K562 (cell line): ENCODE measurements at regions of chr1 and their contacts with region 1.

Region 1: GRCh38 chr1:2227346-2228153 is 569 bp upstream of the SKI start:
- DNase-seq: peak; percentile 97 to 99 (median 98)
- ATAC-seq: peak; percentile 92
- H3K4me3 ChIP-seq: peak overlapping the region; percentile 70
- H3K27ac ChIP-seq: peak overlapping the region; percentile 99
- H3K4me1 ChIP-seq: peaks cover 19 to 59% of the 10 kb centered on the region in 2 experiments
- H3K27me3 ChIP-seq: no peaks in the 10 kb centered on the region
- CTCF ChIP-seq: peak in 1 of 3 experiments; percentile 12; a peak in 2 of 6 replicates
- EP300 ChIP-seq: no peak
- POLR2A ChIP-seq: peak; percentile 79
- RAD21 ChIP-seq: peak in 1 of 2 experiments; percentile 32; a peak in 2 of 4 replicates

Region 2: DNA sequence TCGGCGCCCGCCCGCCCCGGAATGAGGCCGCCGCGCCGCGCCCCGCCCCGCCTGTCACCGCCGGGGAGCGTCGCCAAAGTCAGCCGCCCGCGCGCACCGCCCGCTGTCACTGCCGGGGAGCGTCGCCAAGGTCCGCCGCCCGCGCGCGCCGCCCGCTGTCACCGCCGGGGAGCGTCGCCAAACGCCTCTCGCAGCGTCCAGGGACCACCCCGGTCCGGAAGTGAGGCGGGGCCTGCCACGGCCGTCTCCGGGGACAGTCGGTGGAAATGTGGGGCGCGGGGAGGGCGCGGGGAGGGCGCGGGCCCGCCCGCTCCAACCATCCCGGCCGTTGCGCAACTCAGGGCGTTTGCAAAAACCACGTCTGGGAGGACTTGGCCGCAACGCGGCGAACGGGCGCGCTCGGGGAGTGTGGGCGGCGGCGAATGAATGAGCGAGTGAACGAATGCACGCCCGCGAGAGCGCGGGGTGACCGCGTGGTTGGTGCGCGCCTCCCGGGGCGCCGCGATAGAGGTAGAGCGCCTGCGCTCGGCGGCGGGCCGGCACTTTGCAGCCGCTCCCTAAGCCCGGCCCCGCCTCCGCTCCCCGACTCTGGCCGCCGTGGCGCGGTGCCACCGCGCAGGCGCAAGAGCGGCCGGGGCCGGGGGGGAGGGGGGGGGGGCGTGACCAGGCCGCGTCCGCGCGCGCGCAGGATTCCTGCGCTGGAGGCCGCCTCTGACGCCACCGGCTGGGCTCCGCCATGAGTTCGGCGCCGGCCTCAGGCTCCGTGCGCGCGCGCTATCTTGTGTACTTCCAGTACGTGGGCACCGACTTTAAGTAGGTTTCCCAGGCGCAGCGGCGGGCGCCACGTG is 919.4 kb before region 1 on chr1 and contains the starts of genes ACAP3 and PUSL1:
- CTCF ChIA-PET with region 1: no interaction called
- POLR2A ChIA-PET with region 1: no interaction called
- in situ Hi-C with region 1: no loop called
- intact Hi-C with region 1: loop called (anchors 10 kb)
- DNase-seq: peak; percentile 95 to 99 (median 97)
- ATAC-seq: peak; percentile 52
- H3K4me3 ChIP-seq: peak within 1 kb of the TSS; percentile 94
- H3K27ac ChIP-seq: peak within 1 kb of the TSS; percentile 96
- H3K4me1 ChIP-seq: peaks cover 41 to 97% of the 10 kb centered on the region in 2 experiments
- H3K27me3 ChIP-seq: no peaks in the 10 kb centered on the region
- CTCF ChIP-seq: peak in 1 of 3 experiments; percentile 2; a peak in 1 of 6 replicates
- EP300 ChIP-seq: no peak
- POLR2A ChIP-seq: peak; percentile 63
- RAD21 ChIP-seq: no peak
- polyA plus RNA-seq, gene ACAP3: 0.01 to 0.06 TPM
- polyA plus RNA-seq, gene PUSL1: 0.62 to 1.7 TPM

Region 3: GRCh38 chr1:1511533-1512285 is 715.8 kb before region 1 on chr1 and contains the start of gene ATAD3A:
- CTCF ChIA-PET with region 1: no interaction called
- POLR2A ChIA-PET with region 1: no interaction called
- in situ Hi-C with region 1: no loop called
- intact Hi-C with region 1: no loop called
- DNase-seq: peak; percentile 93 to 100 (median 96)
- ATAC-seq: peak; percentile 96
- H3K4me3 ChIP-seq: peak within 1 kb of the TSS; percentile 93
- H3K27ac ChIP-seq: peak within 1 kb of the TSS; percentile 91
- H3K4me1 ChIP-seq: peaks cover 0 to 19% of the 10 kb centered on the region in 2 experiments; a peak in 2 of 5 replicates
- H3K27me3 ChIP-seq: no peaks in the 10 kb centered on the region
- CTCF ChIP-seq: peak in 1 of 3 experiments; percentile 7; a peak in 1 of 6 replicates
- EP300 ChIP-seq: no peak
- POLR2A ChIP-seq: peak; percentile 92
- RAD21 ChIP-seq: no peak
- polyA plus RNA-seq, gene ATAD3A: 0.10 to 1.0 TPM

Region 4: GRCh38 chr1:2205191-2205952 is 22.2 kb before region 1 on chr1:
- CTCF ChIA-PET with region 1: no interaction called
- POLR2A ChIA-PET with region 1: interaction called, 12 read pairs
- in situ Hi-C with region 1: no loop called
- intact Hi-C with region 1: loop called (anchors 2 kb)
- DNase-seq: peak in 1 of 4 experiments; percentile 95
- ATAC-seq: peak; percentile 87
- H3K4me3 ChIP-seq: peak overlapping the region; percentile 45
- H3K27ac ChIP-seq: peak overlapping the region; percentile 78
- H3K4me1 ChIP-seq: peaks cover 34 to 84% of the 10 kb centered on the region in 2 experiments
- H3K27me3 ChIP-seq: no peaks in the 10 kb centered on the region
- CTCF ChIP-seq: 0 out of 6 replicates have a peak, but pooled peaks of 1 of the 3 experiments have one; percentile 25
- EP300 ChIP-seq: peak; percentile 7; the same call in 1 of the 2 replicates
- POLR2A ChIP-seq: peak; percentile 54
- RAD21 ChIP-seq: peak in 1 of 2 experiments; percentile 30; a peak in 1 of 4 replicates

Region 5: GRCh38 chr1:2215909-2216766 is 11.4 kb before region 1 on chr1:
- CTCF ChIA-PET with region 1: no interaction called
- POLR2A ChIA-PET with region 1: interaction called, 22 read pairs
- in situ Hi-C with region 1: no loop called
- intact Hi-C with region 1: no loop called
- DNase-seq: no peak
- ATAC-seq: no peak
- H3K4me3 ChIP-seq: no peak overlapping the region
- H3K27ac ChIP-seq: no peak overlapping the region
- H3K4me1 ChIP-seq: peaks cover 20 to 46% of the 10 kb centered on the region in 2 experiments
- H3K27me3 ChIP-seq: no peaks in the 10 kb centered on the region
- CTCF ChIP-seq: no peak
- EP300 ChIP-seq: no peak
- POLR2A ChIP-seq: no peak
- RAD21 ChIP-seq: no peak

Region 6: GRCh38 chr1:2240270-2241156 is 13.0 kb after region 1 on chr1:
- CTCF ChIA-PET with region 1: no interaction called
- POLR2A ChIA-PET with region 1: interaction called, 33 read pairs
- in situ Hi-C with region 1: no loop called
- intact Hi-C with region 1: no loop called
- DNase-seq: peak in 2 of 4 experiments; percentile 33 to 41
- ATAC-seq: peak; percentile 12; the same call in 2 of the 3 replicates
- H3K4me3 ChIP-seq: no peak overlapping the region
- H3K27ac ChIP-seq: no peak overlapping the region
- H3K4me1 ChIP-seq: peaks cover 0 to 59% of the 10 kb centered on the region in 2 experiments; a peak in 4 of 5 replicates
- H3K27me3 ChIP-seq: no peaks in the 10 kb centered on the region
- CTCF ChIP-seq: no peak
- EP300 ChIP-seq: no peak
- POLR2A ChIP-seq: no peak
- RAD21 ChIP-seq: no peak